Activated naive CD4-positive, alpha-beta T cell treated with anti-CD3 and anti-CD28 coated beads for 36 hours (primary cell): ENCODE measurements at regions of chr4 and their contacts with region 1.

Region 1: DNA sequence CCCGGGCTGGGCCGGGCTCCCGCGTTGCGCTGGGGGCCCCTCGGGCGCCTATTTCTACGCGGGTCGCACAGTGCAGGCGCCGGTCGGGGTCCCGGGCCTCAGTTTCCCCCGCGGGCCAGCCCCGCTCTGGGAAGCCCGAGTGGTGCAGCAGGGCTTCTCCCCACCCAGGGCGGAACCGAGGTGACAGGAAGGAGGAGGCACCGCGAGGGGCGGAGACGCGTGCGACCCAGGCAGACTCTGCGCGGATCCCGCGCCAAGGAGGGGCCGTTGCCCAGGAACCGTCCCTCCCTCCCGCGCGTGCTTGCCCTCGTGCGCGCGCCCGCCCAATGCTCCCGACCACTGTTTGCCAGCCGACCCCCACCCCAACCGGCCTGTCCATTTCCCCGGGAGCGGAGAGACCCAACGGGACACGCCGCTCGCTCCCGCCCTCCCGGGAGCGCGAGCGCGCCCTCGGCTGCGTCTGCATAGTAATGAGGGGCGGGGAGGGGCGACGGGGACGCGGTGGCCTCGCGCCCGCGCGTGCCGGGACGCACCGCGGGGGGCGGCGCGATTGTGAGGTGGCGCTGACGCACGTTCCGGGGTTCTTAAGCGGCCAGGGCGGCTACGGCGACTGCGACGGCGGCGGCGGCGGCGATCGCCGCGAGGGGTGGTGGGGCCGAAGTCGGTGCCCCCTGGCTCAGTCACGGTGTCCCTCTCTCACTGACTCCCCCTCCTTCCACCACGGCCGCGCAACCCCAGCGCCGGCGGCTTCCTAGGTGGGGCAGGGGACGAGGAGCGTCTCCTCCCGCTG is at the start of gene CPEB2:
- DNase-seq: peak; percentile 91
- H3K4me3 Mint-ChIP-seq: peak within 1 kb of the TSS; percentile 88
- H3K27ac Mint-ChIP-seq: peak within 1 kb of the TSS; percentile 94
- H3K4me1 Mint-ChIP-seq: peaks cover 12% of the 10 kb centered on the region
- H3K27me3 Mint-ChIP-seq: no peaks in the 10 kb centered on the region
- total RNA-seq, gene CPEB2: 4.4 to 5.4 TPM

Region 2: DNA sequence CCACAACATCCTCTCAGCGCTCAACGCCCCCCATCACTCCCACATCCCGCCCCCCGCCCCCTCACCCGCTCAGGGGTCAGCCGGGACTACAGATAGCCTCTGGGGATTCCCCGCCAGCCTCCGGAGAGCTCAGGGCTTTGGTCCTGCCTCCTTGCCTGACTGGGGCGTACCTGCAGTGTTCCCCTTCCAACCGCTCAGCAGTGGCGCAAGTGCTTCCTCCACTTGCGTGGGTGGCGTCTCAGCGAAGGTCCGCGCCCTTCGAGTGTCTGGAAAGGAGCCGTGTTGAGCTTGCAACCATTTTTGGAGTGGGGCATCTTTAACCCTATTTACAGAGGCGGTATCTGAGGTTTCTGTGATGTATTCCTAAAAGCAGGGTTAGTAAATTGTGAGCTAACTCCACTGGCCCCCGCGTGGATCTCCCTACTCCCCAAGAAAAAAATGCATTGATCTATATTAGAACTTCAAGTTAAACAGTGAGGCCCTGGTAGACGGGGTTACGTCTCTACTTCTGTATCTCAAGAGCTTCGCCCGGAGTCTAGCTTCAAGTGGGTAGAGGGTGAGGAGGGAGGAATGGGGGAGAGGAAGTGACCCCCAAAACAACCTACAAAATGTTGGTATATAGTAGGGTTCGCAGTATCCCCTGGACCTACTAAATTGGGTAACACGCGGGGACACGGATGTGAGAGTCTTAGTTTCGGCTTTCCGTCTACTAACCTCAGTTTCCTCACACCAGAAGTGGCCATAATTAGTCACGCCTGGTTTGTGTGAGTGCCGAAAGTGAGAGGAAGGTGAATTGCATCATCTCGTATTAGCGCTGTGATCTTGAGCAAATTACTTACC is 1473.9 kb before region 1 on chr4:
- CTCF ChIA-PET with region 1: no interaction called
- intact Hi-C with region 1: loop called (anchors 5 kb)
- DNase-seq: peak; percentile 57
- H3K4me3 Mint-ChIP-seq: peak overlapping the region; percentile 43
- H3K27ac Mint-ChIP-seq: no peak overlapping the region
- H3K4me1 Mint-ChIP-seq: peaks cover 35% of the 10 kb centered on the region
- H3K27me3 Mint-ChIP-seq: peaks cover 85% of the 10 kb centered on the region

Region 3: DNA sequence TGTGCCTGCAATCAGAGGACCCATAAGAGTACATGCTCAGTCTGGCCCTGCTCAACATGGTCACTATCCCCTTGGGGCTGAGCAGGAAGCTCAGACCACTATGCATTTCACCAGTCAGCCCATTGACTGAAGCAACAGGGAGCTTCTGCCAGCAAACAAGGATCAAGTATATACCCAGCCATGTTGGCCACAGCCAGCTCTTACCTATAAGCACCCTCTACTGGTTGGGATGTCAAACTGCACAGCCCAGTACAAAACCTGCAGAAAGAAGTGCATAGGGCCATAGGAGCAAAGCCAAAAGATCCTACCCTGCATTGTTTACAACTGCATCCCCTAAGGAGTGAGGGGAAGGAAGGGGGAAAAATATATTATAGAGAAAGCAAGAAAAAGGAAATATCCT is 214.2 kb before region 1 on chr4:
- CTCF ChIA-PET with region 1: no interaction called
- intact Hi-C with region 1: loop called (anchors 1 kb)
- DNase-seq: peak; percentile 41
- H3K4me3 Mint-ChIP-seq: no peak overlapping the region
- H3K27ac Mint-ChIP-seq: no peak overlapping the region
- H3K4me1 Mint-ChIP-seq: peaks cover 21% of the 10 kb centered on the region
- H3K27me3 Mint-ChIP-seq: peaks cover 33% of the 10 kb centered on the region

Region 4: DNA sequence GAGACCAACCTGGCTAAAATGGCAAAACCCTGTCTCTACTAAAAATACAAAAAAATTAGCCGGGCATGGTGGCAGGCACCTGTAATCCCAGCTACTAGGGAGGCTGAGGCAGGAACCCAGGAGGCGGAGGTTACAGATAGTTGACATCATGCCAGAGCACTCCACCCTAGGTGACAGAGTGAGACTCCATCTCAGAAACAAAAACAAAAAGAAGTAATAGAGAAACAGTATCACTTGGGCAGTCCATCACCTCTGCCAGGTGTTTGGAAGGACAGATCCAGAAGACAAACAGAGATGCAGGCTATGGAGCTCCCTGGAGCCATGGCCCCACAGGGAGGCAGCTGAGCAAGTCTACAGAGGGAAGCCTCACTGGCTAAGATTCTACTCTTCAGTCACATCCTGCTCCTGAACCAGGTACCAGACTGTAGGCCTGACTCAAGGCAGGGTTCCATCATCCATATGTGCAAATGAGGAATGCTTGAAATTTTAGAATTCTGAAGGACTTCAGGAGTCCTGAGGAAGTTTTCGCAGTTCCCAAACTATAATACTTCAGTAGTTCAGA is 81.2 kb before region 1 on chr4:
- CTCF ChIA-PET with region 1: no interaction called
- intact Hi-C with region 1: loop called (anchors 2 kb)
- DNase-seq: peak; percentile 35
- H3K4me3 Mint-ChIP-seq: no peak overlapping the region
- H3K27ac Mint-ChIP-seq: no peak overlapping the region
- H3K4me1 Mint-ChIP-seq: no peaks in the 10 kb centered on the region
- H3K27me3 Mint-ChIP-seq: peaks cover 9% of the 10 kb centered on the region

Region 5: GRCh38 chr4:14987054-14987453 is 15.0 kb before region 1 on chr4:
- CTCF ChIA-PET with region 1: no interaction called
- intact Hi-C with region 1: no loop called
- DNase-seq: no peak
- H3K4me3 Mint-ChIP-seq: no peak overlapping the region
- H3K27ac Mint-ChIP-seq: no peak overlapping the region
- H3K4me1 Mint-ChIP-seq: no peaks in the 10 kb centered on the region
- H3K27me3 Mint-ChIP-seq: peaks cover 3% of the 10 kb centered on the region

Region 6: DNA sequence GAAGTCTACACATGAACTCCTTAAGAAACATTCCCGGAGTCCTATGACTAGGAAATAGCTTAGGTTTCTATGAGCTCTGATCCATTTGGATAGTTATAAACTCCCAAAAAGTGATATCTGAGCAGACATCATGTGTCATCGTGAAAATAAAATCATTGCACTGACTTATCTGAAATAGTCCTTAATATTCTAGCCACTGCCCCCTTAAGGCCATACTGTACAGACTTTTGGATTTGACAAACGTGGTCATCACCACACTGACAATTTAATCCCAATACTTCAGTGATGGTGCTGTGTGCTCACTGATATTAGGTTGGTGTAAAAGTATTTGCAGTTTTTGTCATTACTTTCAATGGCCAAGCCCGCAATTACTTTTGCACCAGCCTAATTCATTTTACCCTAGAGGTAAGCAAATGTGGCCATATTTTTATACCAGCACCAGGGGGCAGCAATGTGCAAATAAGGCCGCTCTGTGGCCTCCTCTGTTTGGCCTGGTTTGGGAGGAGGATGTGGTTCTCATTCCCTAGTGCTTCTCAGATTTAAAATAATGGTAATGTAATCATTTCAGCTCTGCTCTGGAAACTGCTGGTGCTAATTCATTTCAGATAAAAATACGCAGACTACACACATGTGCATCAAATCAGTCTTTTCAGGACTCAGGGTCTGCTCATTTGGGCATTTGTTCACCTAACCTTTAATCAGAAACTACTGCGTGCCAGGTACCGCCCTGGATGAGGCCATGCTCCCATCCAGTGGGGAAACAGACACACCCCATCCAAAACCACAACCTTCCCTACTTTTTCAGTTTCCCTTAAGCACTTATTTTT is 229.4 kb after region 1 on chr4:
- CTCF ChIA-PET with region 1: interaction called, 3 read pairs
- intact Hi-C with region 1: loop called (anchors 2 kb)
- DNase-seq: peak; percentile 89
- H3K4me3 Mint-ChIP-seq: no peak overlapping the region
- H3K27ac Mint-ChIP-seq: no peak overlapping the region
- H3K4me1 Mint-ChIP-seq: peaks cover 27% of the 10 kb centered on the region
- H3K27me3 Mint-ChIP-seq: no peaks in the 10 kb centered on the region

Region 7: GRCh38 chr4:15756361-15756861 is 754.3 kb after region 1 on chr4:
- CTCF ChIA-PET with region 1: no interaction called
- intact Hi-C with region 1: loop called (anchors 5 kb)
- DNase-seq: peak; percentile 89
- H3K4me3 Mint-ChIP-seq: peak overlapping the region; percentile 54
- H3K27ac Mint-ChIP-seq: peak overlapping the region; percentile 83
- H3K4me1 Mint-ChIP-seq: peaks cover 44% of the 10 kb centered on the region
- H3K27me3 Mint-ChIP-seq: no peaks in the 10 kb centered on the region